ENCODE measurements at regions of chr10 and their contacts with region 1.

Region 1: DNA sequence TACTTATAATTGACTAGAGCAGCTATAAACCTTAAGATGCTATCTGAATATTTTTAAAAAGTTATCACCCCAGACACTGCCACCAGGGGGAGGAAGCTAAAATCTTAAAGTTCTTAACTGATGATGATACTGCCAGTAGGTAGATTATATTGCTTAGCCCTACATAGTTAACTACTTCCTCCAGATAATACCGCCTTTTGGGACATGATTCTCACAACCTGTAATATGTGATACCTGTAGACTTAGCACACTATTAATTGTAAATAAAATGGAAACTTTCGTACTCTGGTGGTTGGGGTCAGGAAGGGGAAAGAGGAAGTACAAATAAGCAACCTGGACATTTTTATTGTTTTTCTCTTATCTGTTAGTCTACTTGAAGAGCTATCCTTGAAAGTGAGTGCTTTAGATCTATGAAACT is 268.9 kb downstream of the ADK start:
- DNase-seq: peak; percentile 49
- H3K4me3 ChIP-seq: no peak overlapping the region
- H3K27ac ChIP-seq: no peak overlapping the region
- H3K4me1 ChIP-seq: no peaks in the 10 kb centered on the region
- H3K27me3 ChIP-seq: no peaks in the 10 kb centered on the region
- CTCF ChIP-seq: peak in 1 of 2 donors; percentile 23
- POLR2A ChIP-seq: no peak

Region 2: DNA sequence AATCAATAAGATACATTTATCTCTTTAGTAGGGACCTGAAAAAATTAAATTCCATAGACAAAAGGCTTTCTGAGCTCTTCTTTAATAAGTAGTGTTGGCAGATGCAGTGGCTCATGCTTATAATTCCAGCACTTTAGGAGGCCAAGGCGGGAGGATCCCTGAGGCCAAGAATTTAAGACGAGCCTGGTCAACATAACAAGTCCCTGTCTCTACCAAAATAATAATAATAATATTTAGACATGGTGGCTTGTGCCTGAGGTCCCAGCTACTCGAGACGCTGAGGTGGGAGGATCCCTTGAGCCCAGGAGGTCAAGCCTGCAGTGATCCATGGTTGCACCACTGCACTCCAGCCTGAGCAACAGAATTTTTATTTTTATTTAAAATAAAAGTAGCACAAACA is 11.8 kb after region 1 on chr10:
- CTCF ChIA-PET with region 1: interaction called, 11 read pairs
- POLR2A ChIA-PET with region 1: no interaction called
- dilution Hi-C with region 1: no loop called
- intact Hi-C with region 1: no loop called
- DNase-seq: no peak
- H3K4me3 ChIP-seq: no peak overlapping the region
- H3K27ac ChIP-seq: no peak overlapping the region
- H3K4me1 ChIP-seq: no peaks in the 10 kb centered on the region
- H3K27me3 ChIP-seq: no peaks in the 10 kb centered on the region
- CTCF ChIP-seq: no peak
- POLR2A ChIP-seq: no peak

Region 3: GRCh38 chr10:74502963-74503608 is 83.1 kb after region 1 on chr10:
- CTCF ChIA-PET with region 1: interaction called, 13 read pairs
- POLR2A ChIA-PET with region 1: interaction called, 6 read pairs
- dilution Hi-C with region 1: no loop called
- intact Hi-C with region 1: no loop called
- DNase-seq: peak; percentile 90
- H3K4me3 ChIP-seq: peak overlapping the region in 1 of 3 experiments; percentile 49
- H3K27ac ChIP-seq: peak overlapping the region; percentile 81
- H3K4me1 ChIP-seq: peaks cover 42% of the 10 kb centered on the region
- H3K27me3 ChIP-seq: no peaks in the 10 kb centered on the region
- CTCF ChIP-seq: no peak
- POLR2A ChIP-seq: no peak